Activated CD4-positive, alpha-beta T cell treated with anti-CD3 and anti-CD28 coated beads, Interleukin-2, amount 10 ng/mL, durations not matched to agents 7 days and 5 days (primary cell): ENCODE measurements at regions of chr3 and their contacts with region 1.

Region 1: DNA sequence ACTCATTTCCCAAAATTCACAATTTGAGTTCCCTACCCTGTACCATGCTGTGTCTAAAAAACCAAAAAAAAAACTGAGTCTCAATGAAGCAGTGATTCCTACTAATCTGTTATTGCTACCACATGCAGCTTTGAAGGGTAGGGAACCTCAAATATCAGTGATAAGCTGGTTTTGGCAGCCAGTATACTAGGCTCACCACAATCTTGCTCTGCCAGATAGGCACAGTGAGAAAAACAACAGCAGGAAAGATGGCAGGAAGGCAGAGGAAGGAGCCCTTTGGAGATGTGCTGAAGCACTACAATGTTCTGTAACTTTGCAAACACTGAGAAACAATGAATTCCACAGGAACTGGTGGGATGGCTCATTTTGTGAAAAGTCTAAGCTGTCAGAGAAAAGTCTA is 96.9 kb upstream of the UBP1 start:
- DNase-seq: no peak
- H3K4me3 Mint-ChIP-seq: no peak overlapping the region
- H3K27ac Mint-ChIP-seq: no peak overlapping the region
- H3K4me1 Mint-ChIP-seq: no peaks in the 10 kb centered on the region
- H3K27me3 Mint-ChIP-seq: no peaks in the 10 kb centered on the region

Region 2: GRCh38 chr3:33440323-33441232 is 96.6 kb before region 1 on chr3 and contains the start of gene UBP1:
- CTCF ChIA-PET with region 1: no interaction called
- POLR2A ChIA-PET with region 1: interaction called, 22 read pairs
- DNase-seq: peak; percentile 98
- H3K4me3 Mint-ChIP-seq: peak within 1 kb of the TSS; percentile 99
- H3K27ac Mint-ChIP-seq: peak within 1 kb of the TSS; percentile 100
- H3K4me1 Mint-ChIP-seq: peaks cover 46% of the 10 kb centered on the region
- H3K27me3 Mint-ChIP-seq: no peaks in the 10 kb centered on the region
- total RNA-seq, gene UBP1: 63.2 to 76.3 TPM

Region 3: DNA sequence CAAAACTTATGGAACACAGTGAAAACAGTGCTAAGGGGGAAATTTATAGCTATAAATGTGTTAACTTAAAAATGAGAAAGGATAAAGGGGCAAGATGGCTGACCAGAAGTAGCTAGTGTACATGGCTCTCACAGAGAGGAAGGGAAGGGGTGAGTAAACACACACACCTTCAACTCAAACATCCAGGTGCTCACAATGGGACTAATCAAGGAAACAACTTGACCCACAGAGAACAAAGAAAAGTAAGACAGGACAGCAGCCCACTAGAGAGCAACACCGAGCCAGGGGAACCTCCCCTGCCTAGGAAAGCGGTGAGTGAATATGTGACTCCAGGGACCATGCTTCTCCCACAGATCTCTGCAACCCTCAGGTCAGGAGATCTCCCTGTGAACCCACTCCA is 11.9 kb before region 1 on chr3:
- CTCF ChIA-PET with region 1: no interaction called
- POLR2A ChIA-PET with region 1: no interaction called
- DNase-seq: no peak
- H3K4me3 Mint-ChIP-seq: no peak overlapping the region
- H3K27ac Mint-ChIP-seq: no peak overlapping the region
- H3K4me1 Mint-ChIP-seq: no peaks in the 10 kb centered on the region
- H3K27me3 Mint-ChIP-seq: no peaks in the 10 kb centered on the region

Region 4: GRCh38 chr3:33563474-33563873 is 26.3 kb after region 1 on chr3:
- CTCF ChIA-PET with region 1: no interaction called
- POLR2A ChIA-PET with region 1: no interaction called
- DNase-seq: no peak
- H3K4me3 Mint-ChIP-seq: no peak overlapping the region
- H3K27ac Mint-ChIP-seq: no peak overlapping the region
- H3K4me1 Mint-ChIP-seq: no peaks in the 10 kb centered on the region
- H3K27me3 Mint-ChIP-seq: no peaks in the 10 kb centered on the region

Region 5: GRCh38 chr3:33798411-33799201 is 261.5 kb after region 1 on chr3 and contains the start of gene PDCD6IP:
- CTCF ChIA-PET with region 1: no interaction called
- POLR2A ChIA-PET with region 1: interaction called, 11 read pairs
- DNase-seq: peak; percentile 90
- H3K4me3 Mint-ChIP-seq: peak within 1 kb of the TSS; percentile 96
- H3K27ac Mint-ChIP-seq: peak within 1 kb of the TSS; percentile 97
- H3K4me1 Mint-ChIP-seq: peaks cover 51% of the 10 kb centered on the region
- H3K27me3 Mint-ChIP-seq: no peaks in the 10 kb centered on the region
- total RNA-seq, gene PDCD6IP: 164 to 193 TPM